Left cardiac atrium (tissue), 4 donors: ENCODE measurements at regions of chr9 and their contacts with region 1.

Region 1: DNA sequence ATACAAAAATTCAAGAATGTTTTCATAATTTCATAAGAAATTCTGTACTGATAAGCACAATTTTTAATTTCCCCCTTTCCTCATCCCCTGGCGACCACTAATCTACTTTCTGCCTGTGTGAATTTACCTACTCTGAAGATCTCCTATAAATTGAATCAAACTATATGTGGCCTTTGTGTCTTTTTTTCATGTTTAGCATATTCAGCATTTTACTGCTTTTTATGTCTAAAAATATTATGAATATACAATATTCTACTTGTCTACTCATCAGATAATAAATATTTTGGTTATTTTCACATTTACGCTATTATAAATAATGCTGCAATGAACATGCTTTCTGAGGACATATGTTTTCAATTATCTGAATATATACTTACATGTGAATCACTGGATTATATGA is 144.8 kb downstream of the CYLC2 start:
- DNase-seq: no peak
- ATAC-seq: no peak

Region 2: GRCh38 chr9:102087141-102087540 is 1052.8 kb before region 1 on chr9:
- intact Hi-C with region 1: no loop called
- DNase-seq: no peak
- ATAC-seq: no peak

Region 3: GRCh38 chr9:103078581-103078980 is 61.3 kb before region 1 on chr9:
- intact Hi-C with region 1: loop called in 1 of 2 experiments (anchors 2 kb)
- DNase-seq: no peak
- ATAC-seq: no peak

Region 4: GRCh38 chr9:103574056-103574455 is 434.2 kb after region 1 on chr9:
- intact Hi-C with region 1: no loop called
- DNase-seq: no peak
- ATAC-seq: no peak